Activated CD4-positive, alpha-beta T cell treated with anti-CD3 and anti-CD28 coated beads, Interleukin-2, amount 10 ng/mL, durations not matched to agents 24 days and 14 days (primary cell): ENCODE measurements at regions of chr2 and their contacts with region 1.

Region 1: DNA sequence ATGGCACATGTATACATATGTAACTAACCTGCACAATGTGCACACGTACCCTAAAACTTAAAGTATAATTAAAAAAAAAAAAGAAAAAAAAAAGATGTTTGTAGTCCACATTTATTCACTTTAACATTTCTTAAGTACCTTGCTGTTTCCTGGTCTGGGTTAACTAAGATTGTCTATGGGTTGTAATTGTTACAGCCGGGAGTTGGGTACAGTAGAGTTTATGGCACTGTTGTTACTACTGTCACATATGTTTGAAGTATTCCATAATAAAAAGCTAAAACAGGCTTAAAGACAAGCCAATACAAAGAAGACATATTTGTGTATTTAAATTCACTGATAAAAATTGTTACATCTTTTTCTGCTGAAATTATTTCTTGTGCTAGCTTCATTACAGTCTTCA is 36.2 kb downstream of the GCC2 start:
- DNase-seq: no peak
- H3K4me3 Mint-ChIP-seq: no peak overlapping the region
- H3K27ac Mint-ChIP-seq: no peak overlapping the region
- H3K4me1 Mint-ChIP-seq: no peaks in the 10 kb centered on the region
- H3K27me3 Mint-ChIP-seq: no peaks in the 10 kb centered on the region

Region 2: GRCh38 chr2:108396845-108397244 is 88.4 kb before region 1 on chr2:
- intact Hi-C with region 1: no loop called
- DNase-seq: peak; percentile 60
- H3K4me3 Mint-ChIP-seq: no peak overlapping the region
- H3K27ac Mint-ChIP-seq: no peak overlapping the region
- H3K4me1 Mint-ChIP-seq: no peaks in the 10 kb centered on the region
- H3K27me3 Mint-ChIP-seq: peaks cover 5% of the 10 kb centered on the region

Region 3: DNA sequence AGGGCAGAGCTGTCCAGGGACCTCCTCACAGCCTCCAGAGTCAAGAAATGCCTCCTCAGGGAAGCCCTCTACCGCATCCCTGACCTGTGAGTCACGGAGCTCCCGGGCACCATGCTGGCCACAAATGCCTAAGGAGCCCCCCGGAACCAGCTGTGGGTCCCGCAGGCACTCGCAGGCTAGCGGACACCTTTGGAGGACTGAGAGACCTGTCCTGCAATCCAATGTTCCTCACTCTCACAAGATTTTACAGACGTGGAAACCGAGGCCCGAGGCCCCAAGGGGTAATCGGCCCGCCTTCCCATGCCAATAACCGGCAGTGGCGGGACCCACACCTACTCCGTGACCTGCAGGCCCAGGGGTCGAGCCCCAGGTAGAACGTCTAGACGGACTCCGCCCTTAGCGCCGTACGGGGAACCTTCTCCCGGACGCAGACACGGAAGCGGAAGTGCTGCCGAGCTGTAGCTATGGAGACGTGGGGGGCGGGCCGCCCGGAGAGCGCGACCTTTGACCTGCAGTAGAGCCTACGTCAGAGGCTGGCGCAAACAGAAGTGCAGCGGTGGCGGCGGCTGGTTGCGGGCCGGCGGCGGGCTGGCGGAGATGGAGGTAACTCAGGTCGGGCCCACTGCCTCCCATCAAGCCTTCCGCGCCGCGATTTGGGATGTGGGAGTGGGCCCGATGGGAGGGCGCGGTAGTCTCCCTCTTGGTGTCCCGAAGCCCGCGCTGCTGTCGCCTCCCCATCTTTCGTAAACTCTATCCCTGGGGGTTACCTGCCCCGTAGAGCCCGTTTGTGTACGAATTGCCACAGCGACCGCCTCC is 36.4 kb before region 1 on chr2 and contains the start of gene GCC2:
- intact Hi-C with region 1: loop called (anchors 5 kb)
- DNase-seq: peak; percentile 99
- H3K4me3 Mint-ChIP-seq: peak within 1 kb of the TSS; percentile 100
- H3K27ac Mint-ChIP-seq: peak within 1 kb of the TSS; percentile 98
- H3K4me1 Mint-ChIP-seq: peaks cover 27% of the 10 kb centered on the region
- H3K27me3 Mint-ChIP-seq: no peaks in the 10 kb centered on the region
- total RNA-seq, gene GCC2: 38.1 and 43.4 TPM in 2 replicates

Region 4: DNA sequence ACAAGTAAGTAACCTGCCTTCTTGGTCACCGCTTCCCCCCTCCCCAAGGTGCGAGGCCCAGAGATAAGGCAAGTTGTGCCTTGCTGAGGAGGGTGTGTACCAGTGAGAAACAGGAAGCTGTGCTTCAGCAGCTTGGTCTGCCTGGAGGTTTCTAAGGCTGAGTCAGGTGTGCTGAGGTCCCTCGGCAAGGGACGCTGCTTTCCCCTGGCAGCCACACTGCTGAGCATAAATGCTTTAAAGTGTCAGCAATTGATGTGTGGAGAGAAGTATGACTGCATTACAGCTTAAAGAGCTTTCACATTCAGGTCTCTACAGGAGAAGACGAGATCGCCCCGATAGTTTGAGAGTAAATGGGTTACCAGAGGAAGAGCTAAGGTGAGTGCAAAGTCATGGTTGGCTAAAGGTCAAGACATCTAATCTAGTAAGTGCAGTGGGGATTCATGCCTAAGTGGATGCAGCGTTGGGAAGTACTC is 135.9 kb after region 1 on chr2:
- intact Hi-C with region 1: no loop called
- DNase-seq: peak; percentile 93
- H3K4me3 Mint-ChIP-seq: peak overlapping the region; percentile 88
- H3K27ac Mint-ChIP-seq: peak overlapping the region; percentile 97
- H3K4me1 Mint-ChIP-seq: peaks cover 68% of the 10 kb centered on the region
- H3K27me3 Mint-ChIP-seq: no peaks in the 10 kb centered on the region